Sigmoid colon (tissue), 7 donors: ENCODE measurements at regions of chr2 and their contacts with region 1.

Region 1: GRCh38 chr2:28661589-28662001 is 90.0 kb upstream of the PPP1CB start:
- DNase-seq: peak; percentile 95
- H3K4me3 ChIP-seq: no peak overlapping the region
- H3K27ac ChIP-seq: peak overlapping the region; percentile 83 to 94 (median 90)
- H3K4me1 ChIP-seq: peaks cover 0 to 72% (median 63%) of the 10 kb centered on the region in 4 donors
- H3K27me3 ChIP-seq: no peaks in the 10 kb centered on the region
- CTCF ChIP-seq: no peak
- EP300 ChIP-seq: peak; percentile 72 to 95 (median 81)
- POLR2A ChIP-seq: no peak

Region 2: DNA sequence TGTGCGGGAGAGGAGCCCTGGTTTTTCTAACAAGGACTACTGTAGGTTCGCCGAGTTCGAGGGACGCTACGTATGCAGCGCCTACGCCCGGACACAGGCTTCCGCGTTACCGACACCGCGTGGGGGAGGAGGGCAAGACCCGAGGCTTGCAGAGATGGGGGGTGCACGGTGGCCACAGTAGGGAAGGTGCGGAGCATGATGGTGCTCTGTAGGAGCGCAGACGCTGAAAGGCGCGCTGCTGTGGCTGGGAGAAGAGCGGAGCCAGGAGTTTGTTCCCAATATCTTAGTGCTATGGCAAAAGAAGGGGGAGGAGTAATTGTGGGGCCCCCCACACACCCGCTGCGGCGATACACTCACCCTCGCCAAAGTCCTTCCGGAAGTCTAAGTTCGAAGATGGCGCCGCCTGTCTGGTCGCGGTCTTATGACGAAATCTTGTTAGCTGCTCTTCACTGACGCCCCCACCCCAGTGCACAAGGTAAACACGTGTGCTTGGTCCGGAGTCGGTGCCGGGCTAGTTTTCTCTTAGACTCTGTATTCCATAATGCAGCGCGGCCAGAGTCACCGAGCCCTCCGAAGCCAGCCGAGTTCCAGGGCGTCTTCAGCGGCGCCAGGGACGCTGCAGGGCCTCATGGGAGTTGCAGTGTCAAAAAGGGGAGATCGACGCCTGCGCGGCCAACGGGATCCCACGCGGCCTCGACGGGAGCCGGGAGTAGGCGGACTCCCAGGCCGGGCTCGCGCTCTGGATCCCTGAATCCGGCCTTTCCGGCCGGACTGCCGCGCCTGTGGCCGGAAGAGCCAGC is 1305.0 kb before region 1 on chr2 and contains the start of gene GTF3C2:
- intact Hi-C with region 1: no loop called
- DNase-seq: peak; percentile 97
- H3K4me3 ChIP-seq: peak within 1 kb of the TSS; percentile 52 to 94 (median 84)
- H3K27ac ChIP-seq: peak within 1 kb of the TSS; percentile 79 to 93 (median 86)
- H3K4me1 ChIP-seq: peaks cover 0 to 38% (median 34%) of the 10 kb centered on the region in 4 donors
- H3K27me3 ChIP-seq: no peaks in the 10 kb centered on the region
- CTCF ChIP-seq: no peak
- EP300 ChIP-seq: peak in 1 of 4 donors; percentile 6
- POLR2A ChIP-seq: peak in 1 of 2 donors; percentile 33
- total RNA-seq, gene GTF3C2: 23.3 to 46.5 (median 28.9) TPM

Region 3: GRCh38 chr2:28594289-28595108 is 67.1 kb before region 1 on chr2:
- intact Hi-C with region 1: loop called (anchors 5 kb)
- DNase-seq: peak; percentile 96
- H3K4me3 ChIP-seq: peak overlapping the region in 1 of 4 donors; percentile 14
- H3K27ac ChIP-seq: peak overlapping the region; percentile 81 to 93 (median 85)
- H3K4me1 ChIP-seq: peaks cover 0 to 29% (median 25%) of the 10 kb centered on the region in 4 donors
- H3K27me3 ChIP-seq: no peaks in the 10 kb centered on the region
- CTCF ChIP-seq: peak; percentile 83 to 94 (median 87)
- EP300 ChIP-seq: no peak
- POLR2A ChIP-seq: no peak

Region 4: DNA sequence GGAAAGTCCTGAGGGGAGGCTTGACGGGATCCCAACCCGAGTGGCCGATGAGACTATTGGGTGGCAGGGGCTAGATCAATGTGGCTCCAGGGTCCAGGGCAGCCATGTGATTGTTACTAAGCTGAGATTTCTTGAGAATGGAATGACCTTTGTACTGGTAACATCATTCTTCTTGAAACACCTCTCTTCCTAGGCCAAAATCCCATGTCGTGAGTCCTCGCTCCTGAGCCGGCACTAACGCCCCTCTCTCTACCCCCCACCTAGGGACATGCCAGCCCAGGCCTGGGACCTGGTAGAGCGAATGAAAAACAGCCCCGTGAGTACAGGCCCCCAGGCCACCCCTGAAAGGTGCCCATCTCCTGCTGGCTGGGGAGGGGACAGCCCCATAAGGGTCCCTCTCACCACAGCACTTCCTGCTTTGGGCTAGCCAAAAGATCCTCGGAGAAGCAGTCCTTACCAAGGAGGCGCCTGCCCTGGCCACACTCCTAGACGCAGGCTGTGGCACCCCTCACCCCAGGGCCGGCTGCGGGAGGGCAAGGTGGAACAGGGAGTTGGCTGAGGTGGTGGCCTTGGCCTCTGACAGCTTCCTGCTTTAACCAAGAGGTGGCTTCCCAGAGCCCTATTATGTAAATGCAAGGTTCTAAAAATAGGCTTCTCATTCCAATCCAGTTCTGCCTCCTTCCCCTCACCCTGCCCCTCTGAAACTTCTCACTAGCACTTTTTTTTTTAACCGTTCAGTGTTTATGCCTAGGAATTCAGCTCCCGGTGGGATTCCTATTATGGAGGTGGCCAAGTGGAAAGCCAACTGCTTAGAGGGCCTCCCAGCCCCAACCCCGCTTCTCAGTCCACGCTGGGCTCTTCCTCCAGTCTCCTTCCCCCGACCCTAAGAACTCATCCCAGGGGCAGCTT is 36.5 kb before region 1 on chr2:
- intact Hi-C with region 1: loop called (anchors 1 kb)
- DNase-seq: peak; percentile 87
- H3K4me3 ChIP-seq: peak overlapping the region in 2 of 4 donors; percentile 6 to 23
- H3K27ac ChIP-seq: peak overlapping the region; percentile 90 to 94 (median 92)
- H3K4me1 ChIP-seq: peaks cover 0 to 87% (median 76%) of the 10 kb centered on the region in 4 donors
- H3K27me3 ChIP-seq: no peaks in the 10 kb centered on the region
- CTCF ChIP-seq: peak in 1 of 4 experiments; percentile 14
- EP300 ChIP-seq: peak in 2 of 4 donors; percentile 24 to 43
- POLR2A ChIP-seq: no peak

Region 5: DNA sequence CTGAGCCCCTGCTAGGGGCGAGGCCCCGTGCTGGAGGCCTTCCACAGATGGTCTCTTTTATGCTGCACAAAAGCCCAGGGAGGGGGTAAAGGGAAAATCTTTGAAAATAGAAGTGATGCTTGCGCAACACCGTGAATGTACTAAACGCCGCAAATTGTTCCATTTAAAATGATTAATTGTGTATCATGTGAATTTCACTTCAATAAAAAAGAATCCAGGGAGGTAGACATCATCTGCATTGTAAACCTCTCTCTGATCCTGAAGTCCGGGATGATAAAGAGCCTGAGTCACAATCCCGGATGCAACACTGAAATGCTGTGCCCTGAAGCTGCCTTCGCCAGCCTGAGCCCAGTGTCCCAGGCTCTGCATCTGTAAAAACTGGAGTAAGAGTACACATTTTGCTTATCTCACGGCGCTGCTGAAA is 17.7 kb before region 1 on chr2:
- intact Hi-C with region 1: loop called (anchors 1 kb)
- DNase-seq: peak; percentile 73
- H3K4me3 ChIP-seq: no peak overlapping the region
- H3K27ac ChIP-seq: peak overlapping the region; percentile 61 to 92 (median 66)
- H3K4me1 ChIP-seq: peaks cover 0 to 38% (median 25%) of the 10 kb centered on the region in 4 donors
- H3K27me3 ChIP-seq: no peaks in the 10 kb centered on the region
- CTCF ChIP-seq: no peak
- EP300 ChIP-seq: peak in 3 of 4 donors; percentile 40 to 58 (median 49)
- POLR2A ChIP-seq: no peak

Region 6: GRCh38 chr2:28716265-28716867 is 54.8 kb after region 1 on chr2:
- intact Hi-C with region 1: loop called (anchors 5 kb)
- DNase-seq: peak; percentile 87
- H3K4me3 ChIP-seq: no peak overlapping the region
- H3K27ac ChIP-seq: peak overlapping the region; percentile 72 to 80 (median 74)
- H3K4me1 ChIP-seq: peaks cover 0 to 22% (median 19%) of the 10 kb centered on the region in 4 donors
- H3K27me3 ChIP-seq: no peaks in the 10 kb centered on the region
- CTCF ChIP-seq: no peak
- EP300 ChIP-seq: peak in 1 of 4 donors; percentile 38
- POLR2A ChIP-seq: no peak

Region 7: GRCh38 chr2:28736034-28736433 is 74.4 kb after region 1 on chr2:
- intact Hi-C with region 1: no loop called
- DNase-seq: peak; percentile 94
- H3K4me3 ChIP-seq: no peak overlapping the region
- H3K27ac ChIP-seq: peak overlapping the region; percentile 54 to 76 (median 73)
- H3K4me1 ChIP-seq: peaks cover 0 to 19% (median 15%) of the 10 kb centered on the region in 4 donors
- H3K27me3 ChIP-seq: no peaks in the 10 kb centered on the region
- CTCF ChIP-seq: no peak
- EP300 ChIP-seq: peak in 1 of 4 donors; percentile 30
- POLR2A ChIP-seq: no peak